ENCODE measurements at regions of chr2 and their contacts with region 1.

Region 1: GRCh38 chr2:216683846-216684507 is 11.4 kb downstream of the IGFBP5 start:
- DNase-seq: no peak
- H3K4me3 ChIP-seq: no peak overlapping the region
- H3K4me3 Mint-ChIP-seq: no peak overlapping the region
- H3K27ac ChIP-seq: no peak overlapping the region
- H3K27ac Mint-ChIP-seq: no peak overlapping the region
- H3K4me1 ChIP-seq: peaks cover 3% of the 10 kb centered on the region
- H3K4me1 Mint-ChIP-seq: peaks cover 0 to 3% (median 0%) of the 10 kb centered on the region in 3 donors
- H3K27me3 ChIP-seq: peaks cover 4% of the 10 kb centered on the region
- H3K27me3 Mint-ChIP-seq: peaks cover 33 to 77% of the 10 kb centered on the region in 2 donors

Region 2: GRCh38 chr2:217713395-217714286 is 1029.7 kb after region 1 on chr2:
- CTCF ChIA-PET with region 1: interaction called, 24 read pairs
- POLR2A ChIA-PET with region 1: no interaction called
- DNase-seq: peak; percentile 36 to 69 (median 44)
- H3K4me3 ChIP-seq: no peak overlapping the region
- H3K4me3 Mint-ChIP-seq: no peak overlapping the region
- H3K27ac ChIP-seq: no peak overlapping the region
- H3K27ac Mint-ChIP-seq: no peak overlapping the region
- H3K4me1 ChIP-seq: peaks cover 3% of the 10 kb centered on the region
- H3K4me1 Mint-ChIP-seq: peaks cover 0 to 5% (median 0%) of the 10 kb centered on the region in 3 donors
- H3K27me3 ChIP-seq: no peaks in the 10 kb centered on the region
- H3K27me3 Mint-ChIP-seq: peaks cover 4 to 11% of the 10 kb centered on the region in 2 donors